ENCODE measurements at regions of chr6 and their contacts with region 1.

Region 1: GRCh38 chr6:143427109-143427817 is 23.2 kb downstream of the ADAT2 start:
- DNase-seq: peak; percentile 64 to 98 (median 77)

Region 2: GRCh38 chr6:142474531-142475289 is 952.6 kb before region 1 on chr6:
- intact Hi-C with region 1: loop called (anchors 2 kb)
- DNase-seq: peak in 9 of 10 donors; percentile 26 to 95 (median 66)

Region 3: GRCh38 chr6:142558786-142559185 is 868.5 kb before region 1 on chr6:
- intact Hi-C with region 1: loop called (anchors 5 kb)
- DNase-seq: no peak

Region 4: GRCh38 chr6:142692942-142693341 is 734.3 kb before region 1 on chr6:
- intact Hi-C with region 1: loop called (anchors 2 kb)
- DNase-seq: peak in 8 of 10 donors; percentile 58 to 91 (median 72)

Region 5: GRCh38 chr6:143450453-143451371 is 23.4 kb after region 1 on chr6 and contains the starts of genes ADAT2 and PEX3:
- intact Hi-C with region 1: loop called (anchors 1 kb)
- DNase-seq: peak; percentile 82 to 98 (median 88)